HEK293 (cell line): ENCODE measurements at regions of chr17 and their contacts with region 1.

Region 1: GRCh38 chr17:64938925-64939474 is 19.7 kb upstream of the LRRC37A3 start:
- H3K4me3 ChIP-seq: no peak overlapping the region
- H3K27ac ChIP-seq: no peak overlapping the region
- H3K4me1 ChIP-seq: no peaks in the 10 kb centered on the region; the same call in 1 of the 2 replicates
- CTCF ChIP-seq: 0 out of 2 replicates have a peak, but pooled peaks have one; percentile 36

Region 2: DNA sequence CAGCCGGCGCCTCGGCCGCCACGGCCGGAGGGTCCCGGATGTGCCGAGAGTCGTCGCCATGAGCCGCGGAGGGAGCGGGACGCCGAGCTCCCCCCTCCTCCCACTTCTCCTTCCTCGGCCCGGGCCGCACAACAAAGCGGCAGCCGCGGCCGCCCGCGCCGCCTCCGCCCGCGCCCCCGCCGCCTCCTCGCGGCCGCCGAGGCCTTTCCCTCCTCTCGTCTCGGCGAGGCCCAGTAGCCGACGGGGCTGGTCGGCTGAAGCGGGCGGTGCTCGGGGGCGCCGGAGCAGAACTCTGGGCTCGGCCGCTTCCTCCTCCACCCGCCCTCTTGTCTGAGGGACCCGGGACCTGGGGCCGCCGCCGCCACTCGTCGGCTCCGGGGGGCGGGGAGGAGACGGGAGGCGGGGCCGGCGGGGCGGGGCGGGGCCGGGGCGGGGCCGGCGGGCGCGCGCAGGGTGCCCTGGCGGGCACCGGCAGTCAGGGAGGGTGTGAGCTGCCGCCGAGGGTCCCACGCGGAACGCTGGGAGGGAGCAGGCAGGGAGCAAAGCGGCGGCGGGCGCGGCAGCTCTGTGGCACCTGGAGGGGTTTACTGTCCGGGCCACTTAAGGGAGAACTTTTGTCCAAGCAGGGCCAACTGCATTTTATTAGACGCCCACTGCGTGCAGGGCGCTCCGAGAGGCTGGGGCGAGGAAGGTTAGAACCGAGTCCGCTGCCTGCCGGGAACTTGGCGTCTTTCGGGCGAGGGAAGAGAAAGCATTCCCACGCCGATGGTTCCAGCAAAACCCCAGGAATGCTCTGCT is 276.8 kb before region 1 on chr17 and contains the start of gene SMURF2:
- CTCF ChIA-PET with region 1: no interaction called
- POLR2A ChIA-PET with region 1: no interaction called
- H3K4me3 ChIP-seq: peak within 1 kb of the TSS; percentile 82
- H3K27ac ChIP-seq: peak within 1 kb of the TSS; percentile 97
- H3K4me1 ChIP-seq: peaks cover 21% of the 10 kb centered on the region
- CTCF ChIP-seq: no peak

Region 3: DNA sequence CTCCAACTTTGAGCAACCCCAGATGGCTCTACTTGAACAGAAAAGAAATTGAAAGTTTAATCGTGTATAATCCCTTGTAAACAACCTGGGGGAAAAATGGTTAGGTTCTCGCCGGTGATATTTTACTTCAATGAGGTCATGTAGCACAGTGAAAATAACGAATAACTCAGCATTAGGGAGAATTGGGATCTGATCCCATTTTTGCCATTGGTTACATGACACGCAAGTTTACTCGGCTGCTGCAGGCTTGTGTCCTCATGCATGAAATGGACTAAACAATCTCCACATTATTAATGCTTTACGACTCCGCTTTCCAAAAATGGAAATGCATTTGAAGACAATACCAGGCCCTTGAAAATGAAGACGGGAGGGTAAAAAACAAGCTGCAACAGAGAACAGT is 25.8 kb after region 1 on chr17:
- CTCF ChIA-PET with region 1: interaction called, 12 read pairs
- POLR2A ChIA-PET with region 1: no interaction called
- H3K4me3 ChIP-seq: no peak overlapping the region
- H3K27ac ChIP-seq: no peak overlapping the region
- H3K4me1 ChIP-seq: 0 out of 2 replicates have a peak, but pooled peaks cover 2% of the 10 kb centered on the region
- CTCF ChIP-seq: no peak